ENCODE measurements at regions of chr5 and their contacts with region 1.

Region 1: GRCh38 chr5:112757468-112758208 is 20.0 kb downstream of the APC start:
- DNase-seq: no peak
- ATAC-seq: peak; percentile 89

Region 2: GRCh38 chr5:112551419-112552032 is 206.1 kb before region 1 on chr5:
- intact Hi-C with region 1: loop called (anchors 2 to 10 kb)
- DNase-seq: no peak
- ATAC-seq: peak; percentile 73

Region 3: DNA sequence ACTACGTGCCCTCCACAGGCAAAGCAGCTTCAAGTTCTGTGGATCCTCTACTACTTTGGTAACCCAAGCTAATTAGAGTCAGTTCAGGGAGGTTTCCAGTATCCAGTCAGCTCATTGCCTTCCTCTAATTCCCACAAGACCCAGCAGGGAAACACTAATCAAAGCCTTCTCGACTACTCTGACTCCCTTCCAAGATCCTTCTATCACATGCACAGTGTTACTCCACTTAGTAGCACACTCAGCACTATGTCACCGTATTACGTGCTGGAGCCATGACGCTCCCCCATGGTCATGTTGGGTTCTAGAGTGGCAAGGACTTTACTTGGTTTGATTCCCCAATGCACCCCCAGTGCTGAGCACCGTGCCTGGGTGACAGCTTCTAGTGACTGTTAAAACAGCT is 272.0 kb after region 1 on chr5:
- intact Hi-C with region 1: no loop called
- DNase-seq: no peak
- ATAC-seq: no peak

Measured in left colon (tissue), 2 donors.